CD8-positive, alpha-beta T cell (primary cell): ENCODE measurements at regions of chr4 and their contacts with region 1.

Region 1: DNA sequence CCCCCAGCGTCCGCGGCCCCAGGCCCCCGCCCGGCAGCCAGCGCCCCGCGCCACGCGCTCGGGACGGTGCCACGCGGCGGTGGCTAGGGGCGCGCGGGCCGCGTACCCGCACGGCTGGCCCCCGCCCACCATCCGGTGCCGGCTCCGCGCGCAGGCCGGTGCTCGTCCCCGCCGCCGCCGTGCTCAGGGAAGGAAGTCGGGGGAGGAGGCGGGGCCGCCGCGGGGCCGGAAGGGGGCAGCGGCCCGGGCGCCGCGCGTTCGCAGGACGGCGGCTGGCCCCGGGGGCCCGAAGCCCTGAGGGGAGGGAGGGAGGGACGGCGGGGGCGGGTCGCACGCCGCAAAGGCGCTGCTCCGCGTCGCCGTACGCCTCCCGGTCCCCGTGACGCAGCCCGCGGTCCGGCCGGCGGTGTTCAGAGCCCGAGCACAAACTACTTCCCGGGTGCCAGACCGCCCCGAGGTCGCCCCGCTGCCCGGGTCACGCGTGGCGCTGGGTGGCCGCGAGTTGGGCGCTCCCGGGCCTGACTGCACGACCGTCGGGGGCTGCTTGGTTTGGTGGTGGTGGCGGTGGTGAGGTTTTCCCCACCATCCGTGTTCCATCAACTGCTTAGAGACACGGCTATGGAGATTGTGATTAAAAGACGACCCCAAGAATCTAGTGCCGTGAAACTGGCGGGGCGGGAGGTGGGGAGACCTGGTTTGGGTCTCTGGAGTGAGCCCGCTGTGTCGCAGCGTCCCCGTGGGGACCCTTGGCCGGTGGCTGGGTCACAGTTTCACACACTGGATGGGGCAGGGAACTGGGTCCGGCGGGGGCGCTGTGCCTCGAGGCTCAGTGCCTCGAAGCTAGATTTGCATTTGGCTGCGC is at the start of gene DCTD:
- DNase-seq: peak; percentile 47 to 89 (median 80)
- ATAC-seq: peak; percentile 72
- H3K4me3 ChIP-seq: peak within 1 kb of the TSS; percentile 82 to 85
- H3K4me3 Mint-ChIP-seq: peak within 1 kb of the TSS; percentile 89
- H3K27ac ChIP-seq: peak within 1 kb of the TSS; percentile 96 to 97
- H3K27ac Mint-ChIP-seq: peak within 1 kb of the TSS; percentile 92
- H3K4me1 ChIP-seq: peaks cover 32% of the 10 kb centered on the region
- H3K4me1 Mint-ChIP-seq: peaks cover 60% of the 10 kb centered on the region
- H3K27me3 ChIP-seq: no peaks in the 10 kb centered on the region
- H3K27me3 Mint-ChIP-seq: peaks cover under 1% of the 10 kb centered on the region
- CTCF ChIP-seq: peak; percentile 20
- total RNA-seq, gene DCTD: 49.6 to 57.0 TPM

Region 2: GRCh38 chr4:183098723-183099536 is 181.5 kb after region 1 on chr4 and contains the start of gene WWC2:
- CTCF ChIA-PET with region 1: no interaction called
- POLR2A ChIA-PET with region 1: interaction called, 3 read pairs
- intact Hi-C with region 1: loop called in 1 of 2 experiments (anchors 2 kb)
- DNase-seq: peak in 8 of 9 experiments; percentile 46 to 78 (median 60)
- ATAC-seq: peak; percentile 78
- H3K4me3 ChIP-seq: peak within 1 kb of the TSS; percentile 62 to 86
- H3K4me3 Mint-ChIP-seq: peak within 1 kb of the TSS; percentile 76
- H3K27ac ChIP-seq: peak within 1 kb of the TSS in 1 of 2 experiments; percentile 22
- H3K27ac Mint-ChIP-seq: no peak within 1 kb of the TSS
- H3K4me1 ChIP-seq: peaks cover 18% of the 10 kb centered on the region
- H3K4me1 Mint-ChIP-seq: peaks cover 10% of the 10 kb centered on the region
- H3K27me3 ChIP-seq: peaks cover 0 to 7% of the 10 kb centered on the region in 2 experiments
- H3K27me3 Mint-ChIP-seq: peaks cover 34% of the 10 kb centered on the region
- CTCF ChIP-seq: no peak
- total RNA-seq, gene WWC2: 0.73 to 1.8 TPM

Region 3: DNA sequence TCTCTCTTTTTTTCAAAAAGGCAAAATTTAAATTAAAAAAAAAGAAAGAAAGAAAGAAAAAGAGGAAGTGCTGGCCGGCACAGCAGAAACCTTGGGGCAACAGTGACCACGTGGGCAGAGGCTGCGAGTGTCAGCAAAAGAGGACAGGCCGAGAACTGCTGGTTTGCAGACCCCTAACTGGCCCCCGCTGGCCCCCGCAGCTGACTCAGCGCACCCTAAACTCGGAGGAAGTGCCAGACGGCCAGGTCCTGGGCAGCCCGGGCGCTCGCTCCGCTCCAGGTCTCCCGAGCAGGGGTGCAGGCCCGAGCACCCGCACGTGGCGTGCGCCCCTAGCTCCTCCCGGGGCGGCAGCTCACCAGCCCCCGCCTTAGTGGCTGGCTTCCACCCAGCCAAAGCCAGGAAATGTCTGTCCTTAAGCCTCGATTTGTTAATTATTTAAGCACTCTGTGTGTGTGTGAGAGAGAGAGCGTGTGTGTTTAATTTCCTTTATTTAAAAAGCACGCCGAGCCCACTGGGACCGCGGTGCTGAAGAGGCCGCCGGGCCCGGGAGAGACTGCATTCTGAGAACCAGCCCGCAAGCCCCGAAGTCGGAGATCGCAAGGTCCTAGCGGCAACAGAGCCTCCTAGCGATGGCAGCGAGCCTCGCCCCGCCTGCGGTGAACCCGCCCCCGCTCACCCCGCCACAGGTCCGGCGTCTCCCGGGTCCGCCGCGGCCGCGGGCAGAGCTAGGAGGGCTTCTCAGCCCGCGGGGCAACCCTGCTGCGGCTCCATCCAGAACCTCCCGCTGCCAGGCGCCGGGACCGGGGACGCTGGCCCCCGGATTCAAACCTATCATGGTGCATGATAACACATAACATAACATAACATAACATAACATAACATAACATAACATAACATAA is 481.1 kb after region 1 on chr4:
- CTCF ChIA-PET with region 1: no interaction called
- POLR2A ChIA-PET with region 1: no interaction called
- intact Hi-C with region 1: loop called in 1 of 2 experiments (anchors 5 kb)
- DNase-seq: peak; percentile 31 to 78 (median 63)
- ATAC-seq: peak; percentile 91
- H3K4me3 ChIP-seq: peak overlapping the region; percentile 56 to 83
- H3K4me3 Mint-ChIP-seq: peak overlapping the region; percentile 85
- H3K27ac ChIP-seq: peak overlapping the region in 1 of 2 experiments; percentile 39
- H3K27ac Mint-ChIP-seq: peak overlapping the region; percentile 55
- H3K4me1 ChIP-seq: peaks cover 13% of the 10 kb centered on the region
- H3K4me1 Mint-ChIP-seq: peaks cover 18% of the 10 kb centered on the region
- H3K27me3 ChIP-seq: no peaks in the 10 kb centered on the region
- H3K27me3 Mint-ChIP-seq: peaks cover 2% of the 10 kb centered on the region
- CTCF ChIP-seq: no peak

Region 4: DNA sequence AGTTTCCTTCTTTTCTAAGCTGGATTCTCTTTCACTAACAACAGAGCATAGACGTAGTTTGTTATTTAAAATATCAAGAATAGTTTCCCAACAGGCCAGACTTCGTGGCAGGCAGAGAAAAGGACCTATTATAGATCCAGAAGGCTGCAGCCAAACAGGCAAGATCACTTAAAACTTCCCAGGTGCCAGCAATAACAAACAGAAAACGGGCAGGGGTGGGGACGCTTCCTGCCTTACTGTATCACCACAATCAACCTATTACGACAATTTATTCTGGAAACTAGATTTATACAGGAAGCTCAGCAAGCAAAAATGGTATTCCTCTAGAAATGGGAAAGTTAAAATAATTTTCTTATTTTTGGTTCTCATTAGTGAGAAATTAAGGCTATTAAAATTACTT is 719.5 kb after region 1 on chr4:
- CTCF ChIA-PET with region 1: no interaction called
- POLR2A ChIA-PET with region 1: no interaction called
- intact Hi-C with region 1: no loop called
- DNase-seq: no peak
- ATAC-seq: no peak
- H3K4me3 ChIP-seq: no peak overlapping the region
- H3K4me3 Mint-ChIP-seq: no peak overlapping the region
- H3K27ac ChIP-seq: no peak overlapping the region
- H3K27ac Mint-ChIP-seq: no peak overlapping the region
- H3K4me1 ChIP-seq: no peaks in the 10 kb centered on the region
- H3K4me1 Mint-ChIP-seq: peaks cover 2% of the 10 kb centered on the region
- H3K27me3 ChIP-seq: no peaks in the 10 kb centered on the region
- H3K27me3 Mint-ChIP-seq: no peaks in the 10 kb centered on the region
- CTCF ChIP-seq: no peak

Region 5: DNA sequence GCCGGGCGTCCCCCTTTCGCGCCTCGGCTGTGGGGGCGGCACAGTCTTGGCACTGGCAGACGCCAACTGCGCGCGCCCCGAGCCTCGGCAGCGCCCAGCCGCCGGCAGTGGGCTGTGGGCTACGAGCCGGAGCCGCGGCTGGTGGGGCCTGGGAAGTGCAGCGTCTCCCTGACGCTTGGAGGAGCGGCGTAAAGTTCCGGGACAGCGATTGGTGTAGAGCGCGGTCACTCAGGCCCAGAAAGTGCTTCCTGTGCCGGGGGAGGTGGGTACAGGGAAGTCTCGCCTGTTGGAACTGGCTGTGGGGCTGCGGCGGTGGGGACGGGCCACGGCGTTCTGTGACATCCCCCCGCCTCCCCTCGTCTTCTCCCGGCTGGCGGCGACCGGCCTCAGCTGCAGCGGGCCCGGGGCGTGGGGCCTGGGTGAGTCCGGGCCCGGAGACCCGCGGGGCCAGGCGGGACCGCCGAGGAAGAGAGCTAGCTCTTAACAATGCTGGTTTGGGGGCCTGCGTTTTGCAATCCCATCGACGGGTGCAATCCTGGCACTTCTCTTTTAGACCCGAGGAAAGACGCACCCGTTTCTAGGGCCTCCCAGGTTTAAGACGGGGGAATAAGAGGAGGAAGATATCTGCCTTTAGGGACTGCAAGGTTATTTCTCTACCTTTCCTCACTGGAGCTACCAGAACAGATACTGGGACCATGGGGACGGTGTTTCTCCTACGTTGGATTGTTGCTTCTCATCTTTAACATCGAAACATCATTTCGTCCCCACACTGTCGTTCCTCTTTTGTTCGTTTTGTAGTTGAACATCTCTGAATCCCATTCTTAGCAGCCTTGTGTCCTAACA is 741.8 kb after region 1 on chr4 and contains the starts of genes RWDD4 and TRAPPC11:
- CTCF ChIA-PET with region 1: no interaction called
- POLR2A ChIA-PET with region 1: interaction called, 3 read pairs
- intact Hi-C with region 1: loop called (anchors 5 kb)
- DNase-seq: peak; percentile 90 to 99 (median 95)
- ATAC-seq: peak; percentile 96
- H3K4me3 ChIP-seq: peak within 1 kb of the TSS; percentile 72 to 83
- H3K4me3 Mint-ChIP-seq: peak within 1 kb of the TSS; percentile 92
- H3K27ac ChIP-seq: peak within 1 kb of the TSS; percentile 83 to 89
- H3K27ac Mint-ChIP-seq: peak within 1 kb of the TSS; percentile 91
- H3K4me1 ChIP-seq: peaks cover 25% of the 10 kb centered on the region
- H3K4me1 Mint-ChIP-seq: peaks cover 42% of the 10 kb centered on the region
- H3K27me3 ChIP-seq: no peaks in the 10 kb centered on the region
- H3K27me3 Mint-ChIP-seq: no peaks in the 10 kb centered on the region
- CTCF ChIP-seq: no peak
- total RNA-seq, gene RWDD4: 9.0 to 12.1 TPM
- total RNA-seq, gene TRAPPC11: 14.7 to 22.1 TPM